ENCODE measurements at regions of chr5 and their contacts with region 1.

Region 1: GRCh38 chr5:150129813-150130492 is 25.7 kb downstream of the PDGFRB start:
- DNase-seq: peak; percentile 50 to 72
- H3K4me3 ChIP-seq: peak overlapping the region; percentile 42; the same call in 1 of the 2 replicates
- H3K27ac ChIP-seq: no peak overlapping the region
- H3K4me1 ChIP-seq: no peaks in the 10 kb centered on the region
- H3K27me3 ChIP-seq: no peaks in the 10 kb centered on the region; the same call in 1 of the 2 replicates
- CTCF ChIP-seq: peak; percentile 94

Region 2: GRCh38 chr5:149749481-149750365 is 380.2 kb before region 1 on chr5:
- CTCF ChIA-PET with region 1: no interaction called
- POLR2A ChIA-PET with region 1: no interaction called
- intact Hi-C with region 1: no loop called
- DNase-seq: peak in 1 of 2 experiments; percentile 48
- H3K4me3 ChIP-seq: no peak overlapping the region
- H3K27ac ChIP-seq: peak overlapping the region; percentile 24
- H3K4me1 ChIP-seq: peaks cover 59% of the 10 kb centered on the region
- H3K27me3 ChIP-seq: no peaks in the 10 kb centered on the region
- CTCF ChIP-seq: no peak

Region 3: DNA sequence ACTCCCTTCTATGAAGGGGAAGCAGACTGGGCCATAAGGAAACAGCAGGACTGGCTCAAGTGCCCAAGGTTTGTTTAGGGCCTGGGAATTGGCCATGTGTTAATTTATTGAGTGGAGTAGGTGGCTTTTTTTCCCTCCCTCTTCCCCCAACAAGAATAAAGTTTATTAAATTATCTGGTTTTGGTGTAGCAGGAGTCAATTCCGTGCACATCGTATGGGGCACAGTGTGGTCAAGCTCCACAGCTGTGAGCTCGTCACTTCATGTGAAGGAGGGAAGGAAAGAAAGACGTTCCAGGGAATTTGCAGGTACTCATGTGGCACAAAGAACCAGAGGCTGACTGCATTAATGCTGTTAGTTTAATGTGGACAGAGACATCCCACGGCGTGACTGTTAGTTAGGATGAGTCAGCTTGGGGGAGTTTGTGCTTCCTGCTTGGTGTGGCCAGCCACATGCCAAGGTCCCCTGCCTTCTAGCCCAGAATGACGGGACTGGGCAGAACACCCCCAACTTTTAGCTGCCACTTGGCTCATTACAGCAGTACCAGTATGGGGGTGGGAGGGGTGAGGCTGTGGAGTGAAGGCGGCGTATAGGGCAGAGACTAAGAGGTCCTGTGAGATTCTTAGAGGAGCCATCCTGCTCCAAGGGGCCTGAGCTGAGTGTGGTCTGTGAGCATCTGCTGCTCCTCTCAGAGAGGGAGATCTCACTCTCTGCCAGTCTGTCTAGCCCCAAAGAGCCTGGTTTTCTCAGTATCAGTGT is 76.8 kb before region 1 on chr5:
- CTCF ChIA-PET with region 1: no interaction called
- POLR2A ChIA-PET with region 1: interaction called, 14 read pairs
- intact Hi-C with region 1: loop called (anchors 5 kb)
- DNase-seq: peak in 1 of 2 experiments; percentile 36
- H3K4me3 ChIP-seq: no peak overlapping the region
- H3K27ac ChIP-seq: no peak overlapping the region
- H3K4me1 ChIP-seq: peaks cover 12% of the 10 kb centered on the region
- H3K27me3 ChIP-seq: no peaks in the 10 kb centered on the region
- CTCF ChIP-seq: no peak

Region 4: GRCh38 chr5:150161242-150162141 is 31.5 kb after region 1 on chr5:
- CTCF ChIA-PET with region 1: no interaction called
- POLR2A ChIA-PET with region 1: interaction called, 3 read pairs
- intact Hi-C with region 1: loop called (anchors 1 kb)
- DNase-seq: peak; percentile 51 to 91
- H3K4me3 ChIP-seq: peak overlapping the region; percentile 18; the same call in 1 of the 2 replicates
- H3K27ac ChIP-seq: no peak overlapping the region
- H3K4me1 ChIP-seq: no peaks in the 10 kb centered on the region; the same call in 1 of the 2 replicates
- H3K27me3 ChIP-seq: no peaks in the 10 kb centered on the region
- CTCF ChIP-seq: peak; percentile 96